Mammary epithelial cell (primary cell): ENCODE measurements at regions of chr10 and their contacts with region 1.

Region 1: DNA sequence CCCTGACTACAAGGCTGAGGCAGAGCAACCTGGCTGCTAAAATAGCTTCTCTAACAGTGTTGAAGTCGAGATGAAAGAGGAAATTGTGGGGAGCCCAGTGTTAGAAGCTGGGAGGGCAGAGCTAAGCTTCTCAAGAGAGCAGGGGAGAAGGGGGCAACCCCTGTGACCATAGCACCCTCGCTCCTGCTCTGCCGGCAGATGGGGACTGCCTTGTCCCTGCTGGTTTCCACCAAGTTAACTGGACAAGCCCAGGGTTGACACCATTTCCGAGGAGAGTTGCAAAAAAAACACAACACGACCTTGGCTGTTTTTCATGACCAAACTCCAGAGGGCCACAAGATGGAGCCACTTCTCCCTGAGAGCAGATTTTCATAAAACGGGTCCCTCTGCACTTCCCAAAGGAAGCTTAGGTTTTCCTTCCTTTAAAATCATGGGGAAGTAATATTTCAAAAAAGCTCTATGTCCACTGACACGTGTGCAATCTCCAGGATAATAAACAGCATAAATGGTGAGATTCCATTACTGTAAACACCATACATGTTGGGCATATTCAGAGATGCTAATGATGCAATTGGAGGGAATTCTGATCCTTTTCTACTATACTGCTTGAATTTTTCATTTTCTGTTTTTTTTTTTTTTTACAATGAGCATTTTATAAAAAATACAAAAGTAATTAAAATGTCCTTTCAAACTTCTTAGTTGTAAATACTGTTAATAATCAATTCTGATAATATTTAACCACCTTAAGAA is 140.4 kb downstream of the PIP4K2A start:
- DNase-seq: peak; percentile 16
- H3K4me3 ChIP-seq: no peak overlapping the region
- H3K27ac ChIP-seq: no peak overlapping the region
- H3K4me1 ChIP-seq: no peaks in the 10 kb centered on the region
- H3K27me3 ChIP-seq: no peaks in the 10 kb centered on the region
- CTCF ChIP-seq: peak; percentile 28 to 48

Region 2: GRCh38 chr10:22854935-22855421 is 281.0 kb after region 1 on chr10:
- CTCF ChIA-PET with region 1: no interaction called
- dilution Hi-C with region 1: no loop called
- in situ Hi-C with region 1: no loop called
- intact Hi-C with region 1: loop called (anchors 10 kb)
- DNase-seq: no peak
- H3K4me3 ChIP-seq: no peak overlapping the region
- H3K27ac ChIP-seq: no peak overlapping the region
- H3K4me1 ChIP-seq: peaks cover 6% of the 10 kb centered on the region
- H3K27me3 ChIP-seq: no peaks in the 10 kb centered on the region
- CTCF ChIP-seq: no peak